Activated CD8-positive, alpha-beta T cell treated with anti-CD3 and anti-CD28 coated beads, Interleukin-2, amount 10 ng/mL, durations not matched to agents 7 days and 5 days (primary cell): ENCODE measurements at regions of chr11 and their contacts with region 1.

Region 1: GRCh38 chr11:35138943-35139721 is at the start of gene CD44:
- DNase-seq: peak; percentile 80
- ATAC-seq: peak; percentile 69
- H3K4me3 Mint-ChIP-seq: peak within 1 kb of the TSS; percentile 88
- H3K27ac Mint-ChIP-seq: peak within 1 kb of the TSS; percentile 92
- H3K4me1 Mint-ChIP-seq: peaks cover 47% of the 10 kb centered on the region
- H3K27me3 Mint-ChIP-seq: no peaks in the 10 kb centered on the region
- total RNA-seq, gene CD44: 398 to 399 TPM

Region 2: GRCh38 chr11:34997952-34998528 is 141.1 kb before region 1 on chr11:
- CTCF ChIA-PET with region 1: interaction called, 16 read pairs
- POLR2A ChIA-PET with region 1: interaction called, 4 read pairs
- DNase-seq: no peak
- ATAC-seq: peak; percentile 69
- H3K4me3 Mint-ChIP-seq: no peak overlapping the region
- H3K27ac Mint-ChIP-seq: no peak overlapping the region
- H3K4me1 Mint-ChIP-seq: peaks cover 24% of the 10 kb centered on the region
- H3K27me3 Mint-ChIP-seq: no peaks in the 10 kb centered on the region

Region 3: GRCh38 chr11:35047179-35047578 is 92.0 kb before region 1 on chr11:
- CTCF ChIA-PET with region 1: interaction called, 7 read pairs
- POLR2A ChIA-PET with region 1: interaction called, 14 read pairs
- DNase-seq: peak; percentile 72
- ATAC-seq: peak; percentile 63
- H3K4me3 Mint-ChIP-seq: peak overlapping the region; percentile 51
- H3K27ac Mint-ChIP-seq: peak overlapping the region; percentile 95
- H3K4me1 Mint-ChIP-seq: peaks cover 80% of the 10 kb centered on the region
- H3K27me3 Mint-ChIP-seq: no peaks in the 10 kb centered on the region

Region 4: GRCh38 chr11:35151241-35151640 is 12.1 kb after region 1 on chr11:
- CTCF ChIA-PET with region 1: interaction called, 16 read pairs
- POLR2A ChIA-PET with region 1: interaction called, 26 read pairs
- DNase-seq: no peak
- ATAC-seq: no peak
- H3K4me3 Mint-ChIP-seq: no peak overlapping the region
- H3K27ac Mint-ChIP-seq: peak overlapping the region; percentile 14
- H3K4me1 Mint-ChIP-seq: peaks cover 96% of the 10 kb centered on the region
- H3K27me3 Mint-ChIP-seq: no peaks in the 10 kb centered on the region

Region 5: DNA sequence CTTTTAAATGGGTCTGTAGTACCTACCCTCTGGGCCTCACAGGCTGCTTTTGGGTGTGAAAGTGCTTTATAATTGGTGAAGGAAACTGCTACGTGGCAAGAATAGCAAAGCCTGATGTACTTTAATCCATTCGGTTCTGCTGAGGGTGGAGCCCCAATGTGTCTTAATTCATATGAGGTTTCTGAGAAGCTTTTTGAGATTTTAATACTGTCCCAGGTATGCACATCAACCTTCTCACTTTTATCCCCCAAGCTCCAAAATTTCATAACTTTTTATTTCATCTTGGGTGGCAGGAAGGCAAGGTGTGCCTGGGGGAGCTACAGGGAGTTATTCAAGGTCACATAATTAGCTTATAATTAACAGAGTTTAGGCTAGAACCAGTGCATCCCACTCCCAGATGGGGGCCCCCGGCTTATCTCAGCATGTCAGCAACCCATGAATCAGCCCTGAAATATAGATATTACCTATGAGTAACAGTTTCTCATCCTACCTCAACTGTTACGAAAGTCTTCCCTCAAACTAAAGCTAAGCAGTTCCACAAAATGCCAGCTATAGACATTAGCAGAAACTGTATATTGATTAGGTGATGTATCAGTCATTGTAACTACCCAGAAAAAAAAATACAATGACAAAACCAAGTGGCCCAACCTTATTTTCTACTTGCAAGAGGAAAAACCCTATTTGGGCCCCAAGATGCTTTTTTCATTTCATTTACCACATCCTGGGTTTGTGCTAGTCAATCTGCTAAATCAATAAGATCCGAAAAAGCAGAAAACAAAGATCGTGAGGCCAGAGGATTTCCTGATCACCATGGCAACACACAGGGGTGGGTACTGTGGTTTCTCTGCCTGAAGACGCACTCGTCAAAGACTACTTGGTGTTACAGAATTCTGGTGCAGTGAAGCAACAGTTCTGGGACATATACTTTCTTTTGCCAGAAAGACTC is 26.6 kb after region 1 on chr11:
- CTCF ChIA-PET with region 1: interaction called, 218 read pairs
- POLR2A ChIA-PET with region 1: interaction called, 47 read pairs
- DNase-seq: peak; percentile 97
- ATAC-seq: peak; percentile 68
- H3K4me3 Mint-ChIP-seq: peak overlapping the region; percentile 68
- H3K27ac Mint-ChIP-seq: peak overlapping the region; percentile 99
- H3K4me1 Mint-ChIP-seq: peaks cover 99% of the 10 kb centered on the region
- H3K27me3 Mint-ChIP-seq: no peaks in the 10 kb centered on the region

Region 6: GRCh38 chr11:35178873-35179272 is 39.7 kb after region 1 on chr11:
- CTCF ChIA-PET with region 1: interaction called, 15 read pairs
- POLR2A ChIA-PET with region 1: interaction called, 37 read pairs
- DNase-seq: no peak
- ATAC-seq: no peak
- H3K4me3 Mint-ChIP-seq: no peak overlapping the region
- H3K27ac Mint-ChIP-seq: peak overlapping the region; percentile 89
- H3K4me1 Mint-ChIP-seq: peaks cover 90% of the 10 kb centered on the region
- H3K27me3 Mint-ChIP-seq: no peaks in the 10 kb centered on the region

Region 7: GRCh38 chr11:35305670-35306382 is 166.7 kb after region 1 on chr11:
- CTCF ChIA-PET with region 1: interaction called, 13 read pairs
- POLR2A ChIA-PET with region 1: interaction called, 5 read pairs
- DNase-seq: peak; percentile 68
- ATAC-seq: peak; percentile 84
- H3K4me3 Mint-ChIP-seq: peak overlapping the region; percentile 44
- H3K27ac Mint-ChIP-seq: peak overlapping the region; percentile 83
- H3K4me1 Mint-ChIP-seq: peaks cover 19% of the 10 kb centered on the region
- H3K27me3 Mint-ChIP-seq: no peaks in the 10 kb centered on the region

Region 8: DNA sequence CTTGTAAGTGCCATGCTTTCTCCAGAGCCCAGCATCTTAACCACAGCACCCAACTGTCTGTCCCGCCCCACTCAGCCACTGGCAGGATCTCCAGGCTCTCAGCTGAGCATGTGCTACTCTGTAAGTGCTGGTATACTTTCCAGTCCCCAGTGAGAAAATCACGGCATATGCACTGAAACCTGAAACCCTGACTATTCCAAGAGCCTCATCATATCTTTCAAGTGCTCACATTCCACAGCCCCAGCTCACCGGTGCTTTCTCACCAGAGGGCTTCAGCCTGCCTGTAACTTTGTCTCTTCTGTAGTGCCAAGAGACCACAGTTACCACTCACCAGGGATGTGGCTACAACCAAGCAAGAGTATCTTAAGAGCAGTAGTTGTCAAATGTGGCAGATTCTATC is 410.7 kb after region 1 on chr11:
- CTCF ChIA-PET with region 1: no interaction called
- POLR2A ChIA-PET with region 1: no interaction called
- DNase-seq: no peak
- ATAC-seq: no peak
- H3K4me3 Mint-ChIP-seq: no peak overlapping the region
- H3K27ac Mint-ChIP-seq: no peak overlapping the region
- H3K4me1 Mint-ChIP-seq: no peaks in the 10 kb centered on the region
- H3K27me3 Mint-ChIP-seq: peaks cover 13% of the 10 kb centered on the region